ENCODE measurements at regions of chr3 and their contacts with region 1.

Region 1: GRCh38 chr3:149657926-149658733 is at the start of gene WWTR1:
- DNase-seq: peak; percentile 92 to 98
- H3K4me3 ChIP-seq: peak within 1 kb of the TSS; percentile 95
- H3K27ac ChIP-seq: peak within 1 kb of the TSS; percentile 97
- H3K4me1 ChIP-seq: peaks cover 52% of the 10 kb centered on the region
- H3K27me3 ChIP-seq: no peaks in the 10 kb centered on the region
- CTCF ChIP-seq: 0 out of 2 replicates have a peak, but pooled peaks have one; percentile 15
- total RNA-seq, gene WWTR1: 73.5 and 85.3 TPM in 2 replicates

Region 2: DNA sequence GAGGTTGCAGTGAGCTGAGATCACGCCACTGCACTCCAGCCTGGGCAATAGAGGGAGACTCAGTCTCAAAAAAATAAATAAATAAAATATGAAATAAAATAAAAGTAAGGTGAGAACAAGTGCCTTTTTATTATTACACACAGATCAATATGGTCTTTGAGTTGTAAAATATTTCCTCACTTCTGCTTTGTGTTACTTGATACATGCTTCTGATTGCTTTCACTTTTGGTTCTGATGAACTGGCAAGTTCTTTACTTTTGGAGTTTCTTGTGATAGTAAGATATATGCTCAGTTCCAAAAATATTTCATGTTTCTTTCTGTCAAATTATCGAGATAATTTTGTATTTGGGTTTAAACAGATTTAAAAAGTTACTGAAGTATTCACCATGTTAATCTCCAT is 683.4 kb before region 1 on chr3:
- CTCF ChIA-PET with region 1: no interaction called
- POLR2A ChIA-PET with region 1: no interaction called
- intact Hi-C with region 1: no loop called
- DNase-seq: no peak
- H3K4me3 ChIP-seq: no peak overlapping the region
- H3K27ac ChIP-seq: no peak overlapping the region
- H3K4me1 ChIP-seq: no peaks in the 10 kb centered on the region
- H3K27me3 ChIP-seq: no peaks in the 10 kb centered on the region
- CTCF ChIP-seq: no peak

Region 3: DNA sequence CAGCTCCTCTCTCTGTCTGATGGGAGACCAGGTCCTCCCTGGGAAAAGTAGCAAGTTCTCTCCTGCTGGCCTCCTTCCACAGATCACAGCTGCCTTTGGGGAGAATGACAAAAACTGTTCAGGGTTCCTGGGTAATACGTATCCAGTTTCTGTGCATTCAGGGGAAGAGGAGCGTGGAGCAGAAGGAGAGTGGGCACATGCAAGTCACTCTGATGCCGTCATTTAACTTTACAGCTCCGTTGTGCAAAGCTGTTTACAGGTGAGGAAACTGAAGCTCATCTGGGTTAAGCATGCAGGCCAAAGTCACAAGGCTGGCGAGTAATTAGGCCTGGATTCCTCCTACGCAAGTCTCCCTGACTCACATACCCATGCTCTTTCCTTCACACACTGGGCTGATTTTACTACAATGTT is 273.2 kb before region 1 on chr3:
- CTCF ChIA-PET with region 1: no interaction called
- POLR2A ChIA-PET with region 1: no interaction called
- intact Hi-C with region 1: loop called (anchors 5 kb)
- DNase-seq: peak in 1 of 2 experiments; percentile 66
- H3K4me3 ChIP-seq: no peak overlapping the region
- H3K27ac ChIP-seq: peak overlapping the region; percentile 100
- H3K4me1 ChIP-seq: peaks cover 71% of the 10 kb centered on the region
- H3K27me3 ChIP-seq: no peaks in the 10 kb centered on the region
- CTCF ChIP-seq: no peak

Region 4: DNA sequence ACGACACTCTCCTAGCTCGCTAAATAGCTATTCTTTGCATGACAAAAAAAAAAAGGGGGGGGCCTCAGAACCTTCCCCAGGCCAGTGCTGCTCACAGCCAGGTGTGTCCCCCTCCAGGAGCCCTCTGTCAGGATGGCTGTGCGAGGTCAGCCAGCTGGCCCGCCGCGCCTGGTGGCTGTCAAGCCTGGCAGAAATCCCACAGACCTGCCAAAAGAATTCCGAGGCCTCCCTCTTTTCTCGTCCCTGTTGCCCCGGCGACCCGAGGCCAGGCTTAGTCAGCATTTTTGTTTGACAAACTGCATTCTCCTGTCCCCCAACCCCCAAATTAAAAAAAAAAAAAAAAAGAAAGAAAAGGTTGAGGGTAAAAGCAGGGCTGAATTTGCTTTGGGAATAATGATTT is 121.7 kb before region 1 on chr3:
- CTCF ChIA-PET with region 1: no interaction called
- POLR2A ChIA-PET with region 1: interaction called, 4 read pairs
- intact Hi-C with region 1: loop called (anchors 1 kb)
- DNase-seq: no peak
- H3K4me3 ChIP-seq: no peak overlapping the region
- H3K27ac ChIP-seq: no peak overlapping the region
- H3K4me1 ChIP-seq: no peaks in the 10 kb centered on the region
- H3K27me3 ChIP-seq: no peaks in the 10 kb centered on the region
- CTCF ChIP-seq: no peak

Region 5: DNA sequence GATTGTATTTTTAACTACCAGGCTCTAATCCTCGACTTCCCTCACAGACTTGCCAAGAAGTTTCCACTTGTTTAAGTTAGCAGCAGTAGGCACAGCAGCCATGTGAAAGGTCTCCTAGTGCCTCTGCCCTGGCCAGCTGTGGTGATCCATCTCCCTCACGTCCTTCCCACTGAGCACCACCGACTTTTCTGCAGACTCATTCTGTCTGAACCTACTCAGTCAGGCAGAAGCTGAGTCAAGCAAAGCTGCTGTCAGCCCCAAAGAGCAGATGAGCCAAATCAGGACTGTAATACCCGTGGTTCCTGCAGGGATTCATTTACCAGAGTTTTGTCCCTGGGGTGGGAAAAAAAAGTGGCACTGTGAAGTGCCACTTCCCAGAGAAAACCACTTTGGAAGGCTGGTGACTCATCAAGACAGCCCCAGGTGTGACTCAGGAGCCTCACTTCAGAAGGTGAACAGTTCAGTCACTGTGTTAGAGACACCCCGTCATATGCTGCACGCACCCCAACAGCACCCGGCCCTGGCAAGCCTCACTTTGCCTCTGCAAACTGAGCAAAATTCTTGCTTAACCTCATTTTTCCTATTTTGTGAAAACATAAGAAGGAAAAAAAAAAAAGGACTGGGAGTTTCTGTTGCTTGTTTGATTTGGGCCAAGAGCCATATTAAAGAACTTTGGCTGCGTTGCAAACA is 76.3 kb before region 1 on chr3:
- CTCF ChIA-PET with region 1: interaction called, 4 read pairs
- POLR2A ChIA-PET with region 1: interaction called, 14 read pairs
- intact Hi-C with region 1: loop called (anchors 1 kb)
- DNase-seq: peak; percentile 87 to 97
- H3K4me3 ChIP-seq: peak overlapping the region; percentile 37; the same call in 1 of the 2 replicates
- H3K27ac ChIP-seq: peak overlapping the region; percentile 98
- H3K4me1 ChIP-seq: peaks cover 94% of the 10 kb centered on the region
- H3K27me3 ChIP-seq: no peaks in the 10 kb centered on the region
- CTCF ChIP-seq: no peak

Region 6: DNA sequence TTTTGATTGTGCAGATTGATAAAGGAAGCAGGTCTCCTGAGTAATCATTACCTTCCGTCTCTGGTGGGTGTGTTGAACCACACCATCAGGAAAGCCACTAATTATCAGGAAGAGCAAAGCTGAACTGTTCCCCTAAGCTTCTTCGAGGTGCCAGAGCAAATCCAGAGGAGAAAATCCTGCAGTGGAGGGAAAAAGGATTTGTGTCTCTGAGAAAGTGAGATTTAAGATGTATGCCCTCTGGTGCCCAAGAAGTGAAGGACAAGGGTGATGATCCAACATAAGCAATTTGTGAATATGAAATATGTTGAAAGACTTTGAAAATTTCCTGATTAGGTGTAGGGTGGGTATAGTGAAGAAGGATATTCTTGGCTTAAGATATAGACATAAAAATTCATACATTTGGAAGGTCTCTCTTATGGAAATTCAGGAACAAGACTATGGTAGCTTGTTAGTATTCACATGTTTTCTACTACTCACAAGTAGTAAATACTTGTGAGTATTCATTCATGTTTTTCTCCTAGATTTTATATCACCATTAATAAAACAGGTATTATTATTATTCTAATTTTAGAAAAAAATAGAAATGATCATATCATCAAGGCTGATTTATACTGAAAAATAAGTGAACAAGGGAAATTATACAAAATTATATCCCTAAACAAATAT is 59.4 kb after region 1 on chr3:
- CTCF ChIA-PET with region 1: interaction called, 5 read pairs
- POLR2A ChIA-PET with region 1: interaction called, 6 read pairs
- intact Hi-C with region 1: loop called (anchors 2 kb)
- DNase-seq: peak; percentile 58 to 61
- H3K4me3 ChIP-seq: no peak overlapping the region
- H3K27ac ChIP-seq: no peak overlapping the region
- H3K4me1 ChIP-seq: 0 out of 2 replicates have a peak, but pooled peaks cover 4% of the 10 kb centered on the region
- H3K27me3 ChIP-seq: no peaks in the 10 kb centered on the region
- CTCF ChIP-seq: peak; percentile 81

Region 7: DNA sequence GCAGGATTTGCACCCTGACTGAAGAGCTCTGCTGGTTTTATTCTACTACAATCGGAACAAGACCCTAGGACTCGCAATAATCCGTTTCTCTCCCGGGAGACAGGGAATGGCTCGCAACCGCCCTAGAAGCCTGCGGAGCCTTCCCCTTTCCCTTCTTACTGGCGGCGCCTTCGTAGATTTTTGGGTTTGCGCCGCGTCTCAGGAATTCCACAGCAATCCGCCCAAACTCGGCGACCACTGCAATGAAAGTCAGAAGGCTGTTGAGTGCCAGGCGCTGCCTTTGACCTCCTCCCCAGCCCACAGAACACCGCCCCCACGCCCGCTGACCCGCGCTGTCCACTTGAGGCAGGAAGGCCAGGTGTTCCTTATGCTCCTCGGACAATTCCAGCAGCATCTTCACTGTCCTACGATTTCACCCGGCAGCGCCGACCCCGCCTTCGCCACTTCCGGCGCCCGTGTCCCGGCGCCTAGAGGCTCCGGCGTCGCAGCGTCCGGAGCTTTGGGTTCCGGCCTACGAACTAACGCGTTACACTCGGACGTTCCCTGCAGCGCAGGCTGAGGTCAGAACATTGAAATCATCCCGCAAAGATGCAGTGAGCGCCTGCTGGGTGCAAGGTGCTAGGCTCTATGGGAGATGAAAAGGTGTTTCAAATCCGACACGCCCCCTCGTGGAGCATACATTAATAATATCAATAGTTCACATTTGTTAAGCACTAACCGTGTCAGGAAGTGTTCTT is 94.1 kb after region 1 on chr3 and contains the start of gene COMMD2:
- CTCF ChIA-PET with region 1: interaction called, 3 read pairs
- POLR2A ChIA-PET with region 1: interaction called, 3 read pairs
- intact Hi-C with region 1: loop called (anchors 1 kb)
- DNase-seq: peak; percentile 79 to 84
- H3K4me3 ChIP-seq: peak within 1 kb of the TSS; percentile 88
- H3K27ac ChIP-seq: peak within 1 kb of the TSS; percentile 51
- H3K4me1 ChIP-seq: peaks cover 17% of the 10 kb centered on the region
- H3K27me3 ChIP-seq: no peaks in the 10 kb centered on the region
- CTCF ChIP-seq: peak; percentile 74
- total RNA-seq, gene COMMD2: 58.2 and 74.7 TPM in 2 replicates

Measured in PC-9 (cell line).